ENCODE measurements at regions of chr7 and their contacts with region 1.

Region 1: GRCh38 chr7:37208528-37208927 is 240.1 kb downstream of the ELMO1 start:
- DNase-seq: peak; percentile 30
- H3K4me3 ChIP-seq: no peak overlapping the region
- H3K27ac ChIP-seq: peak overlapping the region in 1 of 2 donors; percentile 16
- H3K4me1 ChIP-seq: no peaks in the 10 kb centered on the region
- H3K27me3 ChIP-seq: no peaks in the 10 kb centered on the region
- CTCF ChIP-seq: peak in 3 of 4 experiments; percentile 33 to 59 (median 40)
- POLR2A ChIP-seq: no peak

Region 2: DNA sequence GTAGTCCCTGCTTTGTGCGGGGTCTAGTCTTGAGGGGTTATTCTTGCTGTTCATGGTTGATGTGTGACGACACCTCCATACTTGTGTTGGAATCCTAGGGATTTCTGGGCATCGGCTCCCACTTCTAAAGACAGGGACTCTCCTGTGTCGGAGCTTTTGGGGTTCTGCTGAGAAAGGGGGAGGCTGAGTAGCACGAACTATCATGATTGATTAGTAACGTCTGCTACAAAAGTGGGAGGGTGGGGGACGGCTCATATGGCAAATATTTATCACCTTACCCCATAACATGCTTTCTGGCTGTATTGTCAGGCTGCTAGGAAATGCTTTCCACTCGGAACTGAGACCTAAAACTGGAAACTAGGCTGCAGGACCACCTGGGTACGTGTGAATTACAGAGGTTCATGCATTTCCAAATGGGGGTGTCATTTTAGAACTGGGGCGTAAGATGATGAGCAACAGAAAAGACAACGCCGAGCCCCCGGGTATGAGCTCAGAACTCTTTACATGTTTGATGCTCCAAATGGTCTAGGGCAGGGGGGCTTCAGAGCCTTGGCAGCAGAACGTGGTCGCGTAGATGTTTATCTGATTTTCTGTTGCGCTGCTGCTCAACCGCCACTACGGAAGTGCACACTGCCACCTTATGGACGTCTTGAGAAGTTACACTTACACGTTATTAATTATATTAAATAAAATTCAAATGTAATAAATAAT is 624.7 kb after region 1 on chr7:
- intact Hi-C with region 1: loop called (anchors 2 kb)
- DNase-seq: peak; percentile 20
- H3K4me3 ChIP-seq: no peak overlapping the region
- H3K27ac ChIP-seq: no peak overlapping the region
- H3K4me1 ChIP-seq: no peaks in the 10 kb centered on the region
- H3K27me3 ChIP-seq: no peaks in the 10 kb centered on the region
- CTCF ChIP-seq: peak; percentile 54 to 72 (median 60)
- POLR2A ChIP-seq: no peak

Measured in prostate gland (tissue), 2 donors.